ENCODE measurements at regions of chr7 and their contacts with region 1.

Region 1: DNA sequence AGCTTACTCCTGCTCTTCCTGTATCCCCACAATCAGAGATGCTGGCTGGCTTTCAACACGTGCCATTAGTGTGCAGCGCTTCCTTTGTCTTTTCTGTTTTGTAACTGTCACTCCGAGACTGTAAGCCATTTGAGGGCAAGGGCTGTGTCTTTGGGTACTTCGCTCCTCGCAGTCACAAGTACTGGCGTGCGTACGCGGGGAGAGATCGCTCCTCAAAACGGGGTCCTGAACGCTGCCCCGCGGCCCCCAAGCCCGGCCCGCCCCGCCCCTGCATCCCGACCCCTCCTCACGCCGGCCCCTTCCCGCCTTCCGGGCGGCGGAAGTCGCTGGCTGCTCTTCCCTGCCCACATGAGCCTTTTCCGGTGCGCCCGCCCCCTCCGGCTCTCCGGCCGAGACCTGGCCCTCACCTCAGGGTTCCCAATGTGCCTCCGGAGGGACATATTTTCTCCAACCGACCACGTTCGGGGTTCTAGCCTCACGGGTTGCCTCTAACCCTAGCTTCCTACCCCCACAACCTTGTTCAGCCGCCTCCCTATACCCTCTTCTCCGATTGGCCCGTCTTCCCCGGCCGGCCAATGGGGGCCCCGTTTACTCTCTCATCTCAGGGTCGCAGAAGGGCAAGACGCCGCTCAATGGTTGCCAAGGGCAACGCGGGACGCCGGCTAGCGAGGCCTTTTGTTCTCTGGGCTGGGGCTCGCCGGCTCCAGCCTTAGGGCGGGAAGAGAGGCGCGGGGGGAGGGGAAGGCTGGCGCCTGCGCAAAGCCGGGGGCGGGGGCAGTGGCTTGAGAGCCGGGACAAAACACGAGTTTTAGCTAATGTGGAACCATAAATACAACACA is at the start of gene CEP41:
- DNase-seq: peak; percentile 90
- H3K4me3 Mint-ChIP-seq: peak within 1 kb of the TSS; percentile 97
- H3K27ac Mint-ChIP-seq: peak within 1 kb of the TSS; percentile 95
- H3K4me1 Mint-ChIP-seq: peaks cover 44% of the 10 kb centered on the region
- H3K27me3 Mint-ChIP-seq: no peaks in the 10 kb centered on the region
- total RNA-seq, gene CEP41: 17.1 and 17.8 TPM in 2 replicates

Region 2: DNA sequence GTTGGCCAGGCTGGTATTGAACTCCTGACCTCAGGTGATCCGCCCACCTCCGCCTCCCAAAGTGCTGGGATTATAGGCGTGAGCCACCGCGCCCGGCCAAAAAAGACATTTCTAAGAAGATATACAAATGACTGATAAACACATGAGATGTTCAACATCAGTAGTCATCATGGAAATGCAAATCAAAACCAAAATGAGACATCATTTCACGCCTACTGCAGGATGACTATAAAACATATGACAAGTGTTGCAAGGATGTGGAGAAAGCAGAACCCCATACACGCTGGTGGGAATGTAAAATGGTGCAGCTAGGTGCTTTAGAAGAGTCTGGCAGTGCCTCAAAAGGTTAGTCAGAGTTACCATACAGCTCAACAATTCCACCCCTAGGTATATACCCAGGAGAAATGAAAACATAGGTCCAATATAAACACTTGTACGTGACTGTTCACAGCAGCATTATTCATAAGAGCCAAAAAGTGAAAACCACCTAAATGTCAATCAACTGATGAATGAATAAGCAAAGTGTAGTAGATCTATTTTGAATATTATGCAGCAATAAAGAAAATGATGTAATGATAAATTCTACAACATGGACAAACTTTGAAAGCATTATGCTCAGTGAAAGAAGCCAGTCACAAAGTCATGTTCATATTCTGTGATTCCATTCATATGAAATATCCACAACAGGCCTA is 260.0 kb before region 1 on chr7:
- intact Hi-C with region 1: loop called (anchors 2 kb)
- DNase-seq: no peak
- H3K4me3 Mint-ChIP-seq: peak overlapping the region; percentile 15
- H3K27ac Mint-ChIP-seq: peak overlapping the region; percentile 92
- H3K4me1 Mint-ChIP-seq: peaks cover 36% of the 10 kb centered on the region
- H3K27me3 Mint-ChIP-seq: no peaks in the 10 kb centered on the region

Region 3: GRCh38 chr7:130277763-130278643 is 162.7 kb before region 1 on chr7:
- intact Hi-C with region 1: loop called (anchors 1 kb)
- DNase-seq: no peak
- H3K4me3 Mint-ChIP-seq: no peak overlapping the region
- H3K27ac Mint-ChIP-seq: peak overlapping the region; percentile 73
- H3K4me1 Mint-ChIP-seq: peaks cover 24% of the 10 kb centered on the region
- H3K27me3 Mint-ChIP-seq: peaks cover 2% of the 10 kb centered on the region

Region 4: DNA sequence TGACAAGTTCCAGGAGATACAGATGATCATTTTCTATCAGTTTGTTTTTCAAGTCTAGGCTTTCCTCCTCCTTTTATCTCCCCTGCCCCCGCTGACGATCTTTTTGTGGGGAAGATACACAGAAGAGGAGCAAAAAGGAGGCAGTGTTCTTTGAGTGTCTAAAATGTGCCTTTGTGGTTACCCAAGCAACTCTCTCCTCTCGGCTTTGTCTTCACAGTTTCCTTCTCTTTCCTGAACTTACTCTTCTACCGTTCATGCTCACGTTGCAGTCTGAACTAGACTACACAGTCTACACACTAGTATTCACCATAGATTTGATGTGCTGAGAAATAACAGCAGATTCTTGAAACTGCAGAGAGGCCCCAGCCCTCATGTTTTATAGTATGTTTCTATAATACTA is 23.5 kb before region 1 on chr7:
- intact Hi-C with region 1: loop called (anchors 2 kb)
- DNase-seq: no peak
- H3K4me3 Mint-ChIP-seq: peak overlapping the region; percentile 1
- H3K27ac Mint-ChIP-seq: peak overlapping the region; percentile 24
- H3K4me1 Mint-ChIP-seq: peaks cover 52% of the 10 kb centered on the region
- H3K27me3 Mint-ChIP-seq: no peaks in the 10 kb centered on the region

Region 5: GRCh38 chr7:130458257-130458656 is 17.5 kb after region 1 on chr7:
- intact Hi-C with region 1: no loop called
- DNase-seq: no peak
- H3K4me3 Mint-ChIP-seq: no peak overlapping the region
- H3K27ac Mint-ChIP-seq: no peak overlapping the region
- H3K4me1 Mint-ChIP-seq: peaks cover 19% of the 10 kb centered on the region
- H3K27me3 Mint-ChIP-seq: peaks cover 4% of the 10 kb centered on the region

Region 6: GRCh38 chr7:130668257-130669084 is 227.7 kb after region 1 on chr7 and contains the start of gene COPG2:
- intact Hi-C with region 1: loop called (anchors 1 kb)
- DNase-seq: peak; percentile 76
- H3K4me3 Mint-ChIP-seq: peak within 1 kb of the TSS; percentile 88
- H3K27ac Mint-ChIP-seq: peak within 1 kb of the TSS; percentile 41
- H3K4me1 Mint-ChIP-seq: peaks cover 22% of the 10 kb centered on the region
- H3K27me3 Mint-ChIP-seq: no peaks in the 10 kb centered on the region
- total RNA-seq, gene COPG2: 19.3 and 20.9 TPM in 2 replicates

Region 7: DNA sequence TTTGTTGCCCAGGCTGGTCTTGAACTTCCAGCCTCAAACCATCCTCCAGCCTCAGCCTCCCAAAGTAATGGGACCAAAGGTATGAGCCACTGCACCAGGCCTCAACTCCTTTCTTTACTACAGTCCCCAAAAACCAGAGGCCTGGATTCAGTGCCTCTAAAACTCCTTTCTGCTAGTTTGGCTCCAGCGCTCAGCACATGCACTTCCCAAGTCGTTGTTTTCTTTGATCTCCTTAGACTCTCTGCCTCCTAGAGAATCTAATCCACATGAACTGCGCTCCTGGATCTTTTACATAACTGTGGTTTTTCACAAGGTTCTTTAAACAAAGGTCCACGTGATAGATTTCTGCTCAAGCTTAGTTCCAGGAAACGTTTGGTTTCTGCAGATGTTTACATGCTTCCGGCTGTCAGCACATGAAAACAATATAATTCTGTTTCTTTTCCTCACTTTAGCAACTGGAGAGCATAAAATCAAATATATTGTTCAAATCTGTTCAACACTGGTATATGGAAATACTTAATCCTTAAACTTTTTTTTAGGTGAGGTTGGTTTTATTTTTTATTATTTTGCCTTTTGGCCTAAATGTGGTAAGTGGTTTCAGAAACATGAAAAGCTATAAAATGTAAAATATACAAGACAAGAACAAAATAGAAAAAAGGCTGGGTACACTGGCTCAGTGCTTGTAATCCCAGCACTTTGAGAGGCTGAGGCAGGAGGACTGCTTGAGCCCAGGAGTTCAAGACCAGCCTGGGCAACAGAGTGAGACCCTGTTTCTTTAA is 616.5 kb after region 1 on chr7:
- intact Hi-C with region 1: no loop called
- DNase-seq: peak; percentile 47
- H3K4me3 Mint-ChIP-seq: peak overlapping the region; percentile 78
- H3K27ac Mint-ChIP-seq: peak overlapping the region; percentile 80
- H3K4me1 Mint-ChIP-seq: peaks cover 52% of the 10 kb centered on the region
- H3K27me3 Mint-ChIP-seq: no peaks in the 10 kb centered on the region